GM10248 (cell line): ENCODE measurements at regions of chr4 and their contacts with region 1.

Region 1: GRCh38 chr4:76105652-76106051 is 31.1 kb downstream of the ART3 start:
- DNase-seq: no peak
- CTCF ChIP-seq: no peak

Region 2: DNA sequence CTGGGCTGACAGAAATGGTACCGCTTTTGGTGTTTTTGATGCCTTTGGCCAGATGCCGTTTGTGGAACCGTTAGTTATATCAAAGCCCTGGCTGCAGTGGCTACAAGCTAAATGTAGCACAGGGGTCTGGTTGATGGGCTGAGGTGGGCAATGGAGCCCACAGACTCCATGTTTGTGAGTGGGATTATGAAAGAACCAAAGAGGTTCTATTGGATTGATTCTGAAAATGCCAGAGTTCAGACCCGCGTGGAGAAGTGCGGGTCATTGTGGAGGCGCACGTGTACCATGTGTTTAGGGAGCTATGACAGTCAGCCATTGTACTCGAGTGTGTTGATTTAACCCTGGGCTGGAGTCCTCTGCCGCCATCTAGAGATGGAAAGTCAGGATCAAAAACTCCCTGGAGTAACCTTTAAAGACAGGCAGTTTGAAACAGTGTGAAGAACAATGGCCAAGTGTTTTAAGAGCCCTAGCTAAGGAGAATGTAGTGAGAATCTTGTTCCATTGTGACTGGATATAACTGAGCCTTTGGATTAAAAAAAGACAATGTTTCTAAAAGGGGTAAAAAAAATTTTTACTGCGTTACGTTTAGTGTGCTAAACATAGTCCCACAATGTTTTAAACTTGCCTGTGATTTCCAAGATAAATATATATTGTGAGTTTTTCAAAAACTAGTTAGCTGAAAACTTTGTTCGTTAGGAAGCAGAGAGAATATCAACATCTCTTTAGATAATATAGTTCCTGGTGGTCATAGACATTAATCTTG is 18.5 kb before region 1 on chr4:
- CTCF ChIA-PET with region 1: interaction called, 11 read pairs
- POLR2A ChIA-PET with region 1: no interaction called
- DNase-seq: peak; percentile 31
- CTCF ChIP-seq: peak; percentile 21

Region 3: DNA sequence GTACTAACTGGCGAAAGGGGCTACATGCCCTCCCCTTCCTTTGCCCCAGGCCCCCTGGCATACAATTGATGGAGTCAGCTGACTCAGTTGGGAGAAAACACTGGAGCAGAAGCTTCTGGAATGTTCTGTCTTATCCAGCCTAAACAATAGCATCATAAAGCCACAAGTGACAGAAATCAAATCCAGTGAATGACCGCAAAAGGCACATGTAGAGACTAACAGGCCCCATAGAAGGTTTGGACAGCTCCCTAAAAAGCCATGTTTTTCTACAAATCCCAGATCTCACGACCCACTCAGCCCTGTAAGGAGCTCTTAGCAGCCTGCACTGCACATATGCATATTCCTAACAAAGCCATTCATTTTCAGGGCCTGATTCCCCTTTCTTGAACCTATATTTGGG is 82.9 kb after region 1 on chr4:
- CTCF ChIA-PET with region 1: no interaction called
- POLR2A ChIA-PET with region 1: no interaction called
- DNase-seq: no peak
- CTCF ChIP-seq: no peak